ENCODE measurements at regions of chr15 and their contacts with region 1.

Region 1: DNA sequence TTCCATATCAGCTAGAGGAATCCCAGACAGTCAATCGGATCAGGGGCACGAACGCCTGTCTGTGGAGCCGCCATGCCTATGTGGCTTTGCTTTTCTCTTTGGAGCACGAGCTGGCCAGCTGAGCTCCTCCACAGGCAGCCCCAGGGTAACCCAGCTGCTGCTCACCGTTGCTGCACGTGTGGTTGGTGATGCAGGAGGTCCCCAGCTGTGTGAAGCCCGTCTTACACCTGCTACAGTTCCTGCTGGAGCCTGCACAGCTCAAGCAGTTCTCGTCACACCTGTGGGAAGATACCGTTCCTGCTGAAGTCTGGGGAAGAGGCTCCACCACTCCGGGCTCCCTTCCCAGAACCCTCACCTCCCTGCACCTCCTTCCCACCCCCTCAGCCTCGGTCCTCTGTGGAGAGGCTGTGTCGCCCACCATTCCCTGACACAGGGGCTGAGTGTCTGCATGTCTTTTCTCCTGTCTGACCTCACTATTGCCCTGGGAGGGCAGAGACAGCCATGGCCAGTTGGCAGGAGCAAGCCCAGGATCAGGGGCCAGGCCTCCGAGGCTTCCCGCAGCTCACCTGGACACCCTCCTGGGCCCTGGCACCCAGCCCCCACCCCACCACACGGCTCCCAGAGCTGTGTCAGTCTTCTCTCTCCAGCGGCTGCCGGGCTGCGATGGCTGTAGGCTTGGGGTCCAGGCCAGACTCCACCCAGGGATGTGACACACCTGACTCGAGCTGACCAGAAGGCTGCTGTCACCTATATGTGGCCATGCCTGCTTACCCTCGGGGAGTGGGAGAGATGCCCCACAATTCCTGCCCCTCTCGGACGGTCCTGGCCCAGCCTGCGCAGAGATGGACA is 12.2 kb upstream of the SNRPA1 start:
- DNase-seq: no peak
- ATAC-seq: no peak
- H3K4me3 ChIP-seq: no peak overlapping the region
- H3K27ac ChIP-seq: no peak overlapping the region
- H3K4me1 ChIP-seq: no peaks in the 10 kb centered on the region
- H3K27me3 ChIP-seq: no peaks in the 10 kb centered on the region
- CTCF ChIP-seq: no peak

Region 2: DNA sequence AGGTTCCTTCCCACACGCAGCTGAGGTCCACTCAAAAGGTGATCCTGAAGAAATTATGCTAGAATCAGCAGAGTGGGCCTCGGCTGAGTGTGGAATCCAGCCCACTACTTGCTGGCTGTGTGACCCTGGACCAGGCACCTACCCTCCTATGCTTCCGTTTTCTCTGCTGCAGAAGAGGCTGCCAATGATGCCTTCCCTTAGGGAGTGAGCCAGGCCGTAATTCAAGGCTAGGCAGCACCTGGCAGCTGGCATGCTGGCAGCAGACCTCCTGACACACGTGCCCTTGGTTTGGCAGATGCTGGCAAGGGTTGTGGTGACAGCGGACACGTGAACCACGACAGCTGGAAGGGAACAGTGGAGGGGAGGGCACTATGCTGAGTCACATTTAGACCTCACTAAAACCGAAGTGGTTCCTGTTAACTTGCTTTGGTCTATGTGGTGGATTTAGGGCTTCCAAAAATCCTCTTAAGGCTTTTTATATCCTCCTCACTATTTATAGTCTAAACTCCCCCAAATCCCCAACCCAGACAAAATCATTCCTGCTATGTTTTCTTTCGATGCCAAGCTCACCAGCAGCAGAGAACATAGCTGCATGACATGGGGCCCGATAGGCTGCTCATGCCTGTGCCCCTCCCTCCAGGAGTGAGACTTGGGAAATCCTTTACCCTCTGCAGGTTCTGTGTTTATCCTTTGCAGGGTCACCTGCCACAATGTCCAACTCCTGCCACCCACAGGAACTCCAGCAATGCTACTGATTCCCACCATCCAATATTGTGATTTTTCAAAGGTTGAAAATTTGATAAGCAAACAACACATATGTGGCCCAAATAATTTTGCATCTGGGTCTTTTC is 192.8 kb after region 1 on chr15:
- intact Hi-C with region 1: loop called in 1 of 3 experiments (anchors 5 kb)
- DNase-seq: peak; percentile 80 to 96 (median 96)
- ATAC-seq: peak; percentile 93 to 95 (median 94)
- H3K4me3 ChIP-seq: no peak overlapping the region
- H3K27ac ChIP-seq: peak overlapping the region in 2 of 4 donors; percentile 51 to 58
- H3K4me1 ChIP-seq: peaks cover 12 to 18% (median 13%) of the 10 kb centered on the region in 3 donors
- H3K27me3 ChIP-seq: no peaks in the 10 kb centered on the region
- CTCF ChIP-seq: no peak

Region 3: GRCh38 chr15:101578437-101578894 is 271.2 kb after region 1 on chr15:
- intact Hi-C with region 1: loop called in 1 of 3 experiments (anchors 5 kb)
- DNase-seq: peak; percentile 41 to 84 (median 54)
- ATAC-seq: peak; percentile 77 to 99 (median 98)
- H3K4me3 ChIP-seq: no peak overlapping the region
- H3K27ac ChIP-seq: no peak overlapping the region
- H3K4me1 ChIP-seq: no peaks in the 10 kb centered on the region
- H3K27me3 ChIP-seq: no peaks in the 10 kb centered on the region
- CTCF ChIP-seq: peak; percentile 13 to 57 (median 46)

Region 4: GRCh38 chr15:101641166-101641764 is 334.0 kb after region 1 on chr15:
- intact Hi-C with region 1: loop called in 2 of 3 experiments (anchors 5 to 10 kb)
- DNase-seq: peak in 4 of 6 donors; percentile 19 to 77 (median 60)
- ATAC-seq: peak; percentile 48 to 89 (median 86)
- H3K4me3 ChIP-seq: no peak overlapping the region
- H3K27ac ChIP-seq: peak overlapping the region in 1 of 4 donors; percentile 10
- H3K4me1 ChIP-seq: no peaks in the 10 kb centered on the region
- H3K27me3 ChIP-seq: no peaks in the 10 kb centered on the region
- CTCF ChIP-seq: peak; percentile 84 to 92 (median 88)